ENCODE measurements at regions of chrX and their contacts with region 1.

Region 1: GRCh38 chrX:111869639-111870034 is 6.3 kb upstream of the TRPC5OS start:
- DNase-seq: peak in 1 of 2 donors; percentile 14
- ATAC-seq: peak in 7 of 8 donors; percentile 61 to 77 (median 72)
- H3K4me3 ChIP-seq: no peak overlapping the region
- H3K27ac ChIP-seq: no peak overlapping the region
- H3K4me1 ChIP-seq: peaks cover 0 to 8% (median 0%) of the 10 kb centered on the region in 9 donors
- H3K27me3 ChIP-seq: peaks cover 0 to 82% (median 0%) of the 10 kb centered on the region in 7 donors
- CTCF ChIP-seq: peak; percentile 23 to 74 (median 67)

Region 2: GRCh38 chrX:112043997-112044396 is 174.4 kb after region 1 on chrX:
- intact Hi-C with region 1: loop called in 2 of 10 experiments (anchors 5 to 10 kb)
- DNase-seq: no peak
- ATAC-seq: no peak
- H3K4me3 ChIP-seq: no peak overlapping the region
- H3K27ac ChIP-seq: no peak overlapping the region
- H3K4me1 ChIP-seq: no peaks in the 10 kb centered on the region
- H3K27me3 ChIP-seq: peaks cover 0 to 58% (median 0%) of the 10 kb centered on the region in 7 donors
- CTCF ChIP-seq: peak in 4 of 9 donors; percentile 14 to 24 (median 20)

Region 3: DNA sequence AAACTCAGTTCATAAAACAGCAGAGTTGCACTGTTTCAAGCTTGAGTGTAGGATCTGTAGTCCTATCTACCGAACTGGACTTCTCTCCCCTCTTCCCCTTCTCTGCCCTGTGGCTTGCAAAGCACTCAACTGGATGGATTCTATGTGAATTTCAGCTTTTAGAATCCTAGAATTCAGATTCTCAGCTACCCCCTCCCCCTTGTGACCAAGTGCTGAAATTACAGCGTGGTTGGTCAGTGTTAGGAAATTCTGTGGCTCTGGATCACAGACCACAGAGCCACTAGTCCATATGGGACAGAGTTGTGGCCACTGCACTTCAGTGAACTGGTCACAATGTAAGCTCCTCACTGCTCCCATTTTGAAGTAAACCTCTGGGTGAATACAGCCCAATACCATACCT is 277.6 kb after region 1 on chrX:
- intact Hi-C with region 1: loop called in 6 of 10 experiments (anchors 5 to 10 kb)
- DNase-seq: no peak
- ATAC-seq: no peak
- H3K4me3 ChIP-seq: no peak overlapping the region
- H3K27ac ChIP-seq: no peak overlapping the region
- H3K4me1 ChIP-seq: no peaks in the 10 kb centered on the region
- H3K27me3 ChIP-seq: peaks cover 0 to 24% (median 0%) of the 10 kb centered on the region in 7 donors
- CTCF ChIP-seq: peak in 7 of 9 donors; percentile 28 to 51 (median 38)

Region 4: GRCh38 chrX:112636951-112637541 is 767.4 kb after region 1 on chrX:
- intact Hi-C with region 1: loop called in 6 of 10 experiments (anchors 2 to 10 kb)
- DNase-seq: no peak
- ATAC-seq: no peak
- H3K4me3 ChIP-seq: no peak overlapping the region
- H3K27ac ChIP-seq: no peak overlapping the region
- H3K4me1 ChIP-seq: no peaks in the 10 kb centered on the region
- H3K27me3 ChIP-seq: peaks cover 0 to 19% (median 0%) of the 10 kb centered on the region in 7 donors
- CTCF ChIP-seq: no peak

Region 5: DNA sequence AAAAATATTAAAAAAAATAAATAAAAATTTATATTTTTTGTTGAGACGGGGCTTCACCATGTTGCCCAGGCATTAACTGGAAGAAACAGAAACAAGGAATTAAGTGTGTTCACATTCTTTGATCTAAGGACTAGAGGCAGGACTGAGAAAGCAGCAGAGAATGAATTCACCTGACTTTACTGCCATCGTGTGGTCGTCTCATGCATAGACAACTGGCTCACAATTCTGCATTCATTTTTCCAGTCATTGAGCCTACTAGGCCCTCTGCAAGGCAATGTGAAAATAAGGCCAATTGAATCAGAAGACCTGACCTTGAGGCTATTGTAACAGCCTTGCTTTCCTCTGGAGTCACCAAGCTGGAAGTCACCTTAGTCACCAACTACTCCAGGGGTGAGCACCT is 772.7 kb after region 1 on chrX:
- intact Hi-C with region 1: loop called in 7 of 10 experiments (anchors 2 to 10 kb)
- DNase-seq: peak in 1 of 2 donors; percentile 7
- ATAC-seq: peak in 6 of 8 donors; percentile 51 to 71 (median 54)
- H3K4me3 ChIP-seq: no peak overlapping the region
- H3K27ac ChIP-seq: no peak overlapping the region
- H3K4me1 ChIP-seq: no peaks in the 10 kb centered on the region
- H3K27me3 ChIP-seq: peaks cover 0 to 14% (median 0%) of the 10 kb centered on the region in 7 donors
- CTCF ChIP-seq: peak; percentile 14 to 73 (median 64)

Measured in heart right ventricle (tissue), 16 donors.